Activated CD4-positive, alpha-beta T cell treated with anti-CD3 and anti-CD28 coated beads, Interleukin-2, amount 10 ng/mL, durations not matched to agents 24 days and 14 days (primary cell): ENCODE measurements at regions of chr15 and their contacts with region 1.

Region 1: DNA sequence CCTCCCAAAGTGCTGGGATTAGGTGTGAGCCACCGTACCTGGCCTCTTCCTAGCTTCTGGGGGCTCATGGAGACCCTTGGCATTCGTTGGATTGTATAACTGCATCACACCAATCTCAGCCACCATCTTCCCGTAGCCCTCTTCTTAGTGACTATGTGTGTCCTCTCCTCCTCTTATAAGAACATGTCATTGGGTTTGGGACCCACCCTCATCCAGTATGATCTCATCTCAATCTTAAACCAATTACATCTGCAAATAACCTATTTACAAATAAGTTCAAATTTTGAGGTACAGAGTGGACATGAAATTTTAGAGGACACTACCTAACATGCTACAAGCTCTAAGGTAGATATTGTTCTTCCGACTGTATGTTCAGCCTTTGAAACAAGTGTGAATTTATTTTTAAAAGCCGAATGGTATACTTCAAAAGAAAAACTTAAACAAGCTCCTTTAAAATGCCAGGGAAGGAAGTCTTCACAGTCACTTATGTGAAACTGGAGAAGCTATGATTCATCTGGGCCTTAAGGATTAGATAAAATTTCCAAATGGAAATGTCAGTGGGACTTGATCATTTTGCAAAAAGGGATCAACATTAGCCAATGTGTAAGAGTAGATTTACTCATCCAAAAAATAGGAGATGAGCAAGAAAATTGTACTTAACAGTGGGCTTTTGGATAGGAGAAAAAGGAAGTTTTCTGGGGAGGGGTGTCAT is 225.7 kb downstream of the MEX3B start:
- DNase-seq: no peak
- H3K4me3 Mint-ChIP-seq: no peak overlapping the region
- H3K27ac Mint-ChIP-seq: no peak overlapping the region
- H3K4me1 Mint-ChIP-seq: no peaks in the 10 kb centered on the region
- H3K27me3 Mint-ChIP-seq: peaks cover 3% of the 10 kb centered on the region

Region 2: GRCh38 chr15:80825376-80826015 is 994.6 kb before region 1 on chr15:
- intact Hi-C with region 1: loop called (anchors 5 kb)
- DNase-seq: no peak
- H3K4me3 Mint-ChIP-seq: no peak overlapping the region
- H3K27ac Mint-ChIP-seq: no peak overlapping the region
- H3K4me1 Mint-ChIP-seq: no peaks in the 10 kb centered on the region
- H3K27me3 Mint-ChIP-seq: no peaks in the 10 kb centered on the region

Region 3: DNA sequence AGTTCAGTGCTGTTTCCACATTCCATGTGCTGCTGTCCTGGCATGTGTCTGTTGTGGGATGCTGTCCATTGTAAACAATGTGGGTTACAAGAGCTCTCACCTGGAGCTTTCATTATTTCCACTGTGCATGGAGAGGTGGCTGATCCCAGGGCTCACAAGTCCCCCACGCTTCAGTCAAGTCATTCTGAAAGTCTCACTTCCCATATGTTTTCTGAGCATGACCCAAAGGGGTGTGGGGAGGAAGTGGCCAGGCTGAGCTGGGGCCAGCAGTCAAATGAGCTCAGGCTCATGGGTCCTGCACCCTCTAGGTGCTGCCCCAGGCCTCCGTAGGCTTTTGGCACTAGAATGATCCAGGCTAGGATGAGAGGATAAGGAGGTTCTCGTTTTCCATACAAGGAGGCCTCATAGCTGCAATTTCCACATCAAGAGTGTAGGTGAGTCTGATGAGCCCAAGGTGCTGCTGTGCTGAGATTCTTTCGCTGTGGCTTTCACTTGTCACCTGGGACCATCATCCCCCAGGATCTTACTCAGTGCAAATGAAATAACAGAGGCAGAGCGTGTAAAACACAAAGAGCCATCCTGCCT is 518.2 kb before region 1 on chr15:
- intact Hi-C with region 1: no loop called
- DNase-seq: peak; percentile 84
- H3K4me3 Mint-ChIP-seq: peak overlapping the region; percentile 94
- H3K27ac Mint-ChIP-seq: peak overlapping the region; percentile 89
- H3K4me1 Mint-ChIP-seq: peaks cover 77% of the 10 kb centered on the region
- H3K27me3 Mint-ChIP-seq: no peaks in the 10 kb centered on the region

Region 4: GRCh38 chr15:81710328-81710727 is 109.8 kb before region 1 on chr15:
- intact Hi-C with region 1: no loop called
- DNase-seq: no peak
- H3K4me3 Mint-ChIP-seq: no peak overlapping the region
- H3K27ac Mint-ChIP-seq: no peak overlapping the region
- H3K4me1 Mint-ChIP-seq: no peaks in the 10 kb centered on the region
- H3K27me3 Mint-ChIP-seq: no peaks in the 10 kb centered on the region

Region 5: DNA sequence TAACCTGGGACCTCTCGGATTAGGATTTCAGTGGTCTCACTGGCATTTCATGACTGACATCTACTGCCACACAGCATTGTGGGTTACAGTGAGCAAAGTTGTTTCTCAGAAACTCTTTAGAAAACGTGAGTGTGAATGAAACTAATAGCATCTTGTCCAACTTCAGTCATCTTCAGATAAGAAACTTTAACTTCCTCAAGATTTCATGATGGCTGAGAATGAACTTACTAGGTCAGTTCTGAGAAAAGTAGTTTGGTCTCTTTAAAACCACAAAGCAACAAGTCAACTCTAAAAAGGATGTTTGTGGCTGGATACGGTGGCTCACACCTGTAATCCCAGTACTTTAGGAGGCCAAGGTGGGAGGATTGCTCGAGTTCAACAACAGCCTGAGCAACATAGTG is 1146.6 kb after region 1 on chr15:
- intact Hi-C with region 1: no loop called
- DNase-seq: peak; percentile 72
- H3K4me3 Mint-ChIP-seq: no peak overlapping the region
- H3K27ac Mint-ChIP-seq: no peak overlapping the region
- H3K4me1 Mint-ChIP-seq: peaks cover 14% of the 10 kb centered on the region
- H3K27me3 Mint-ChIP-seq: peaks cover 29% of the 10 kb centered on the region